ENCODE measurements at regions of chr17 and their contacts with region 1.

Region 1: DNA sequence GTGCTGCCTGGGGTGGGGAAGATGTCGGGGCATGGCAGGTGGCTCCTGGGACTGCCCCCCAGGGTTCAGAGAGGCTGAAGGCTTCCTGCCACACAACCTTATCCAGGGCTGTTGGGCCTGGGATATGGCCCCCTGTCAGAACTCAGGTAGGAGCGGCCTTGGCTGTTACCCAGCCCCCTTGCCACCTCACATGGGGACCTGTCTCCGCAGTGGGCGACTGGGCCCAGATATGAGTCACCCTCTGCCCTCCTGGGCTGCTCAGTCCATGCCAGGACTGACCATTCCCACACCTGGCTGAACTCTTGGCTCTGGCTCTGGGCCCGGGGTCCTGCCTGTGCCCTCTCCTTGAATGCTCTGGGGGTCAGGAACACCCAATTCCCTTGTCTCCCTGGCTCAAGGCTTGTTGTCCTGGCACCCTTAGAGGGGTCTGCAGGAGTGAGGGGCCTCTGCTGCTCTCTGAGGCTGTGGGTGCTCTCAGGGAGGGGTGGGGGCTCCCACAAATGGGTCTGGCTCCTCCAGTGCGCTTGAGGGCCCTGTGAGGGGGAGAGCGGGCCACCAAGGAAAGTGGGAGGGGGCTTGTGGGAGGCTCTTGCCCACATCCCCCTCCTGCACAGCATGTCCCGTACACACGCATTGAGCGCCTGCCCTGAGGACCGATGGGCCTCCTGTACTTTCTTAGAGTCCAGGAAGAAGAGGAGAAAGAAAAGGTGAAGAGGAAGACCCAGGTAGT is 36.0 kb downstream of the LGALS9 start:
- DNase-seq: no peak
- H3K4me3 ChIP-seq: no peak overlapping the region
- H3K27ac ChIP-seq: no peak overlapping the region
- H3K4me1 ChIP-seq: no peaks in the 10 kb centered on the region
- H3K27me3 ChIP-seq: no peaks in the 10 kb centered on the region
- CTCF ChIP-seq: no peak
- POLR2A ChIP-seq: no peak

Region 2: GRCh38 chr17:27751622-27752490 is 84.9 kb after region 1 on chr17:
- intact Hi-C with region 1: loop called (anchors 5 kb)
- DNase-seq: no peak
- H3K4me3 ChIP-seq: no peak overlapping the region
- H3K27ac ChIP-seq: no peak overlapping the region
- H3K4me1 ChIP-seq: no peaks in the 10 kb centered on the region
- H3K27me3 ChIP-seq: no peaks in the 10 kb centered on the region
- CTCF ChIP-seq: no peak
- POLR2A ChIP-seq: no peak

Measured in thyroid gland (tissue), 4 donors.